ENCODE measurements at regions of chr16 and their contacts with region 1.

Region 1: DNA sequence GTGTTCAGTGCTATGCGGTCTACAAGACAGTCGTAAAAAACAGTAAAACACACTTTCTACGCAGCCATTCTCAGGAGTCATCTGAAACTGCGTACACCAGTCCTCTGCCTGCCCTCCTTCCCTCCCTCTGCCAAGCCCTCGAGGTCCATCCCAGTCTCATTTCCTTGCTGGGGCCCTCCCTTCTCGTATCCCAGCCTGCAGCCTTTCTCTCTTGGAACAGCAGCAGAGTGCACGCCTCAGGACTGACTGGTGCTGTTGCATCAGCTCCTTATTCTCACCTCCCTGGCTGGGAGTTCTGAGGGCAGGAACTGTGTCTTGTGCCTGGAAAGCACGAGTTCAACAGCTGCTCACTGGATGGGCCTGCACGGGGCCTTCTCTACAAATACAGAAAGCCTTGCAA is 12.5 kb downstream of the FAHD1 start:
- DNase-seq: peak; percentile 49

Region 2: GRCh38 chr16:1826691-1827575 is 12.6 kb before region 1 on chr16 and contains the starts of genes FAHD1 and HAGH:
- CTCF ChIA-PET with region 1: no interaction called
- POLR2A ChIA-PET with region 1: interaction called, 19 read pairs
- DNase-seq: peak; percentile 97

Region 3: GRCh38 chr16:1858189-1858865 is 18.8 kb after region 1 on chr16:
- CTCF ChIA-PET with region 1: no interaction called
- POLR2A ChIA-PET with region 1: interaction called, 11 read pairs
- DNase-seq: no peak